ENCODE measurements at regions of chr17 and their contacts with region 1.

Region 1: GRCh38 chr17:73359987-73360410 is 48.2 kb upstream of the CDC42EP4 start:
- DNase-seq: peak; percentile 81
- ATAC-seq: peak; percentile 71
- H3K4me3 Mint-ChIP-seq: peak overlapping the region; percentile 40
- H3K27ac Mint-ChIP-seq: peak overlapping the region; percentile 86
- H3K4me1 Mint-ChIP-seq: peaks cover 46% of the 10 kb centered on the region
- H3K27me3 Mint-ChIP-seq: no peaks in the 10 kb centered on the region
- CTCF ChIP-seq: no peak

Region 2: DNA sequence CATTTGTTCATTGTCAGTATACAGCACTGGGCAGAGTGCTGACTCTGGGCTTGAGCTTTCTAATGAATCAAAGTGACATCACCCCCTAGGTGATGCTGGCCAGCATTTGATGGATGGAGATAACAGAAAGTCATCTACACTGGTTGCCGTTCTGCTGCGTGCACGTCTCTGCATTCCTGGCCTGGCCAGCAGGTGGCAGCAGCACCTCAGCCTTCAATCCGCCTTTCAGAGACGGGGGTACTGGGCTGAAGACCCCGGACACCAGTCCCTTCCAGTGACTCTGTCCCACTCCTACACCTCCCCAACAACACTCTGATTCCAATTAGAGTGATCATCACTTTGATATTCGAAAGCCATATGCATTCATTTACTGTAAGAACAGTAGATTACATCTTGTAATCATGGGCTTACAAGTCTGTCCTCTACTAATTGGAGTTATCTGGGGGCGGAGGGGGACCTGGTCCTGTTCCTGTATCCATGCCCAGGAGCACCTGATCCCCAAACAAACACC is 104.3 kb before region 1 on chr17:
- CTCF ChIA-PET with region 1: interaction called, 12 read pairs
- POLR2A ChIA-PET with region 1: no interaction called
- DNase-seq: peak; percentile 87
- ATAC-seq: peak; percentile 87
- H3K4me3 Mint-ChIP-seq: no peak overlapping the region
- H3K27ac Mint-ChIP-seq: no peak overlapping the region
- H3K4me1 Mint-ChIP-seq: peaks cover 14% of the 10 kb centered on the region
- H3K27me3 Mint-ChIP-seq: no peaks in the 10 kb centered on the region; the same call in none of the 2 replicates
- CTCF ChIP-seq: peak; percentile 95

Region 3: DNA sequence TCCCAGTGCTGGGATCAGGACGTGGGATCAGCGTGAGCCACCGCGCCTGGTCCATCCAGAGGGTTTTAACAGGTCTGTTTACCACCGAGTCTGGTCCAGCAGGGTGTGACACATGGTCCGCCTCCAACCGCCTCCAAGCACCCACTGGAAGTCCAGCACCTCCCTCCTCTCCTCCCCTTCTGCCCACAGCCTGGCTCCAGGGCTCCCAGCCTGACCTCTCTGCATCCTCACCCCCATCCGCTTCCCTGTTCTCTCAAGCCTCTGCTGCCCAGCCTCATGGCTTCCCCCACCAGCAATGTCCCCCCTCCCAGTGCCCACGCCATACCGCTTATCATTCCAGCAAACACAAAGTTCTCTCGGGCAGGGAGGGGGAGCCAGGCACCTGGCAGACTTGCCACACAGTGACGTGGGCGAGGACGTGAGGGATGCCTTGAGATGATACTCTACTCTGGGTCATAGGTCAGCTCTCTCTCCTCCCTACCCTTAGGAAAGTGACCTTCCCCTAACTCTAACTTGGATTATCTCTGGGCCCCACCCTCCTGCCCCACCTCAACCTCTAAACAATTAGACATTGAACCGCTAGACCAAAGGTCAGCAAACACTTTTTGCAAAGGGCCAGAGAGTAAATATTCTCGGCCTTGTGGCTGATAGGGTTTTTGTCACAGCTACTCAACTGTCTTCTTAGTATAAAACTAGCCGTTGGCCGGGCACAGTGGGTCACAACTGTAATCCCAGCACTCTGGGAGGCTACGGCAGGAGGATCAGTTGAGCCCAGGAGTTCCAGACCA is 71.3 kb before region 1 on chr17:
- CTCF ChIA-PET with region 1: no interaction called
- POLR2A ChIA-PET with region 1: no interaction called
- DNase-seq: no peak
- ATAC-seq: no peak
- H3K4me3 Mint-ChIP-seq: no peak overlapping the region
- H3K27ac Mint-ChIP-seq: peak overlapping the region; percentile 72; the same call in 1 of the 2 replicates
- H3K4me1 Mint-ChIP-seq: peaks cover 30% of the 10 kb centered on the region
- H3K27me3 Mint-ChIP-seq: no peaks in the 10 kb centered on the region
- CTCF ChIP-seq: no peak

Region 4: GRCh38 chr17:73311781-73312641 is 48.0 kb before region 1 on chr17 and contains the start of gene CDC42EP4:
- CTCF ChIA-PET with region 1: interaction called, 66 read pairs
- POLR2A ChIA-PET with region 1: interaction called, 8 read pairs
- DNase-seq: peak; percentile 96
- ATAC-seq: peak; percentile 89
- H3K4me3 Mint-ChIP-seq: peak within 1 kb of the TSS; percentile 87
- H3K27ac Mint-ChIP-seq: no peak within 1 kb of the TSS
- H3K4me1 Mint-ChIP-seq: peaks cover 33% of the 10 kb centered on the region
- H3K27me3 Mint-ChIP-seq: peaks cover 16% of the 10 kb centered on the region
- CTCF ChIP-seq: no peak
- total RNA-seq, gene CDC42EP4: 17.0 to 18.8 TPM (median 18.4 TPM) in 3 replicates

Region 5: DNA sequence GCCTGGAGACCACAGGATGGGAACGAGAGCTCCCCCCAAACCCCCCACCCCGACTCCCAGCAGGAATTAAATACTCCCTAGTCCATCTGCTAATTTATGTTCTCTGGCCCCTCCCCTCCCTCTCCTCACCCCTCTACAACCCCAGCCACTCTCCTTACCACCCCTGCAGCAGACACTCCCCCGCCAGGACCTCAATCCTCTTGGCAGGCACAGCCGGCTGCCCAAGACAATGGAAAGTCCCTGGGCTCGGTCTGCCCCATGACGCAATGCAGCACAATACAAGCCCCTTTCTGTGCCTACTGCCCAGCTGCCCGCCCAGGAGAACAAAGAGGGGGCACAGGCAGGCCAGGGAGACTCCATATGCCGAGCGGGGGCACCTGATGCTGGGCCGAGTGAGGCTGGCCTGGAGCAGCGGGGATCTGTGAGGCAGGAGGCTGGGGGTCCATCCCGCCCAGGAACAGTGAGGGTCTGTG is 17.9 kb before region 1 on chr17:
- CTCF ChIA-PET with region 1: interaction called, 17 read pairs
- POLR2A ChIA-PET with region 1: interaction called, 8 read pairs
- DNase-seq: peak; percentile 75
- ATAC-seq: peak; percentile 74
- H3K4me3 Mint-ChIP-seq: peak overlapping the region; percentile 18; the same call in 1 of the 2 replicates
- H3K27ac Mint-ChIP-seq: peak overlapping the region; percentile 83
- H3K4me1 Mint-ChIP-seq: peaks cover 48% of the 10 kb centered on the region
- H3K27me3 Mint-ChIP-seq: no peaks in the 10 kb centered on the region
- CTCF ChIP-seq: no peak

Region 6: GRCh38 chr17:73349138-73349537 is 10.9 kb before region 1 on chr17:
- CTCF ChIA-PET with region 1: interaction called, 19 read pairs
- POLR2A ChIA-PET with region 1: interaction called, 8 read pairs
- DNase-seq: no peak
- ATAC-seq: peak; percentile 10; the same call in 1 of the 2 replicates
- H3K4me3 Mint-ChIP-seq: no peak overlapping the region
- H3K27ac Mint-ChIP-seq: no peak overlapping the region
- H3K4me1 Mint-ChIP-seq: peaks cover 33% of the 10 kb centered on the region
- H3K27me3 Mint-ChIP-seq: no peaks in the 10 kb centered on the region
- CTCF ChIP-seq: no peak